ENCODE measurements at regions of chr10 and their contacts with region 1.

Region 1: DNA sequence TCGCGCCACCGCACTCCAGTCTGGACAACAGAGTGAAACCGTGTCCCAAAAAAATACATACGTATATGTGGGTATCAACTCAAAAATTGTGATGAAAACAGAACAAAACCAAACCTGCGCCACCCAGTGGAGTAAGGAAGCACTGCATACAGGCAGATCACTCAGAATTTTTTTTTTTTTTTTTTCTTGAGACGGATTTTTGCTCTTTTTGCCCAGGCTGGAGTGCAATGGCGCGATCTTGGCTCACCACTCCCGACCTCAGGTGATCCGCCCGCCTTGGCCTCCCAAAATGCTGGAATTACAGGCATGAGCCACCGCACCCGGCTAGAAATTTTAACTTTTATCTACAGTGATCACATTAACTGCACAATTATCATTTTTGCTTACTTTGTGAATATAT is 9.1 kb upstream of the TMEM236 start:
- DNase-seq: peak; percentile 5 to 88 (median 60)

Region 2: DNA sequence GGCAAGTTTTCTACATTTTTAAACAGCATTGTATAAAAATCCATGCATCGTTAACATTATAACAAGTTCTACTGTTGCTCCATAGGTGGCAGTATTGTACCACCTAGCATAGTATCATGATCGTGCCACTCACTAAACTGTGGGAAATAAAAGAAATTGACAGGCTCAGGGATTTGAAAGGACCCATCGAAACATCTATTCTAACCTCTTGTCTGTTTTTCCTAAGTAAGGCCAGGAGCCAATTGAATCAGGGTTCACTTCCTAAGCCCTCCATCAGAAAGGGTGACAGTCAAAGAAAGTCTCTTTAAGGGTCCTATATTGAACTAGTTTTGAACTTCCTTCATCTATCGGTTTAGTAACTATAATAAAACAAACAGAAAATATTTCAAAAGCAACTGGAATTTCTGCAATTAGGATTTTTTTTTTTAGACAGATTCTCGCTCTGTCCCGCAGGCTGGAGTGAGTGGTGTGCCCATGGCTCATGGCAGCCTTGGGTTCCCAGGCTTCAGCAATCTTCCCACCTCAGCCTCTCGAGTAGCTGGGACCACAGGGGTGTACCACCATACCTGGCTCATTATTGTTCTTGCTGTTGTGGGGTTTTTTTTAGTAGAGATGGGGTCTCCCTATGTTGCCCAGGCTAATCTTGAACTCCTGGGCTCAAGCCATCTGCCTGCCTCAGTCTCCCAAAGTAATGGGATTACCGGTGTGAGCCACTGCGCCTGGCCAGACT is 135.2 kb before region 1 on chr10:
- intact Hi-C with region 1: loop called (anchors 2 kb)
- DNase-seq: peak in 10 of 42 donors; percentile 11 to 71 (median 36)